ENCODE measurements at regions of chr7 and their contacts with region 1.

Region 1: DNA sequence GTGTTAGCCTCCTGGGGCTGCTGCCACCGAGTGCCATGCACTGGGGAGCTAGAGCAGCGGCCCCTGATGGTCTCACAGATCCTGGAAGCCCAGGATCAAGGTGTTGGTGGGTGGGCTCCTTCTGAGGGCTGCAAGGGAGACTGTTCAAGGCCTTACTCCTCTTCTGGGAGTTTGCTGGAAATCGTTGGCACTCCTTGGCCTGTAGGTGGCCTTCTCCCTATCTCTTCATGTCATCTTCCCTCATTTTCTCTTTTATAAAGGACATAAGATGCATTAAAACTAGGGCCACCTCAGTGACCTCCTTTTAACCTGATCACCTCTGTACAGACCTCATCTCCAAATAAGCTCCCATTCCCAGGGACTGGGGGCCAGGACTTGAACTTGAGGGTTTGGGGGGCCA is 27.0 kb upstream of the ZNF862 start:
- DNase-seq: no peak

Region 2: GRCh38 chr7:149642589-149642988 is 168.6 kb before region 1 on chr7:
- CTCF ChIA-PET with region 1: no interaction called
- POLR2A ChIA-PET with region 1: no interaction called
- DNase-seq: no peak

Region 3: DNA sequence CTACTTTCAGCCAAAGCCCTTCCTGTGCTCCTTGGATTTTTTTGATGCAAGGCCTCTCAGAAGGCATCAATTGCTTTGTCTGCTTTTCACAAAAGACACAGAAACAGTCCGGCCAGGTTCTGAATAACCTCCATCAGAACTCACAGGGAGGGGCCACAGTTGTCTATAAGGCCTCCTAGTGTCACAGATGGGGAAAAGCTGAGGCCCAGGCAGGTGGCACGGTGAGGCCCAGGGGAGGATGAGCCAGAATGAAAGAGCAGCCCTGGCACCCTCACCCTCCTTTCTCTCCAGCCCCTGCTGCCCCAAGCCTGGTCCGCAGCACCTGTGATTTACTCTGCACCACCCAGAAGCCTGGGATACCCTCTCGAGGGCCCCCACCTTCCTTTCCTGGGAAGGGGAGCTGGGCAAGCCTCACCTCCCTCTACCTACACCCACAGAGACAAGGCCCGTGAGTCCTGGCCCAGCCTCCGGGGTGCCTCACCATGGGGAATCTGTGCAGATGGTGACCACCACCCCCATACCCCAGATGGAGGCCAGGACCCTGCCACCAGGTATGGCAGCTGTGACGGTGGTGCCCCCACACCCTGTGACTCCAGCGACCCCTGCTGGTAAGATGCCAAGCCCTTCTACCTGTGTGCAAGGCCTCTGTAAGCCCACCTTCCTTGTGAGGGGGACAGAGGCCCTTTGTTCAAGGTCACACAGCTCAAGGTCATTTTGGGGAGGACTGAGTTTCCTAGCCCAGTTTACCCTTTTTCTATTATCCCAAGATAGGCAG is 11.6 kb before region 1 on chr7:
- CTCF ChIA-PET with region 1: interaction called, 17 read pairs
- POLR2A ChIA-PET with region 1: no interaction called
- DNase-seq: peak; percentile 78

Region 4: GRCh38 chr7:149821447-149822191 is 10.4 kb after region 1 on chr7:
- CTCF ChIA-PET with region 1: interaction called, 10 read pairs
- POLR2A ChIA-PET with region 1: no interaction called
- DNase-seq: no peak

Region 5: GRCh38 chr7:149854611-149855360 is 43.6 kb after region 1 on chr7:
- CTCF ChIA-PET with region 1: interaction called, 20 read pairs
- POLR2A ChIA-PET with region 1: no interaction called
- DNase-seq: peak; percentile 69

Measured in HEK293T (cell line).